Heart right ventricle (tissue), 16 donors: ENCODE measurements at regions of chr14 and their contacts with region 1.

Region 1: GRCh38 chr14:24058260-24058950 is 6.6 kb downstream of the CARMIL3 start:
- DNase-seq: peak; percentile 29 to 42
- ATAC-seq: peak; percentile 68 to 91 (median 83)
- H3K4me3 ChIP-seq: no peak overlapping the region
- H3K27ac ChIP-seq: no peak overlapping the region
- H3K4me1 ChIP-seq: peaks cover 0 to 3% (median 0%) of the 10 kb centered on the region in 9 donors
- H3K27me3 ChIP-seq: peaks cover 0 to 6% (median 0%) of the 10 kb centered on the region in 7 donors
- CTCF ChIP-seq: peak; percentile 48 to 94 (median 77)

Region 2: DNA sequence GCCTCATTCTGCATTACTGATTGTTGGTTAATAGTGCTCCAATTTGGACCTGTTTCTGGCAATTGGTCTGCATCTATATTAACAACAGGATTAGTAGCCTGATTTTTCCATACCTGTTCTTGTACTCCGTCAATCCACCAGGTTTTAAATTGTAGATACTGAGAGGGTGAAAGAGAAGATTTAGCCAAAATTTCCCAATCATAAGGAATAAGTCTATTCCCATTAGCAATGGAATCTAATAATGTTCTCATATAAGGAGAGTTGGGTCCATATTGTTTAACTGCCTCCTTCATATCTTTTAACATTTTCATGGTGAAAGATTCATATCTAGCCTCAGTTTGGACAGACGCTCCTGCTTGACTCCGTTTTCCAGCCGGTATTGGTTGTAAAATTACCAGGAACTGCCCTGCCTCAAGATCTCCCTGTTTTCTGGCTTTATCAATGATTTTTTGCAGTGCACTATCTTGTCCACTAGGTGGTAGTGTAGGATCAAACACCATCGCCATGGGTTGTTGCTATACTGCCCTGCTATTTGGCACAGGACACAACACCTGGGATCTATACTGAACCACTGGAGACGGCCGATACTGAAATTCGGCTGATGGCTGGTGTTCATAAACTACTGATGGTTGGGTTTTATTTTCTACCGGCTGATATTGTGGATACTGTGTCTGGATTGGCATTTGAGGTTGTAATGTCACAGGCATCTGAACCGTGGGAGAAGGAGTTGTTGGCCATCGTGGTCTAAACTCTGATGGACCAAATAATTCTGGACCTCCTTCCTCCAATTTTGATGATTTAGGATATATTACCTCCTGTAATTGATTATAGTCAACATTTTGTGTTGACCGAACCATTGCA is 44.5 kb before region 1 on chr14:
- intact Hi-C with region 1: loop called in 1 of 10 experiments (anchors 5 kb)
- DNase-seq: peak in 1 of 2 donors; percentile 53
- ATAC-seq: peak; percentile 76 to 87 (median 84)
- H3K4me3 ChIP-seq: no peak overlapping the region
- H3K27ac ChIP-seq: no peak overlapping the region
- H3K4me1 ChIP-seq: peaks cover 0 to 16% (median 0%) of the 10 kb centered on the region in 9 donors
- H3K27me3 ChIP-seq: no peaks in the 10 kb centered on the region
- CTCF ChIP-seq: peak; percentile 80 to 97 (median 91)

Region 3: DNA sequence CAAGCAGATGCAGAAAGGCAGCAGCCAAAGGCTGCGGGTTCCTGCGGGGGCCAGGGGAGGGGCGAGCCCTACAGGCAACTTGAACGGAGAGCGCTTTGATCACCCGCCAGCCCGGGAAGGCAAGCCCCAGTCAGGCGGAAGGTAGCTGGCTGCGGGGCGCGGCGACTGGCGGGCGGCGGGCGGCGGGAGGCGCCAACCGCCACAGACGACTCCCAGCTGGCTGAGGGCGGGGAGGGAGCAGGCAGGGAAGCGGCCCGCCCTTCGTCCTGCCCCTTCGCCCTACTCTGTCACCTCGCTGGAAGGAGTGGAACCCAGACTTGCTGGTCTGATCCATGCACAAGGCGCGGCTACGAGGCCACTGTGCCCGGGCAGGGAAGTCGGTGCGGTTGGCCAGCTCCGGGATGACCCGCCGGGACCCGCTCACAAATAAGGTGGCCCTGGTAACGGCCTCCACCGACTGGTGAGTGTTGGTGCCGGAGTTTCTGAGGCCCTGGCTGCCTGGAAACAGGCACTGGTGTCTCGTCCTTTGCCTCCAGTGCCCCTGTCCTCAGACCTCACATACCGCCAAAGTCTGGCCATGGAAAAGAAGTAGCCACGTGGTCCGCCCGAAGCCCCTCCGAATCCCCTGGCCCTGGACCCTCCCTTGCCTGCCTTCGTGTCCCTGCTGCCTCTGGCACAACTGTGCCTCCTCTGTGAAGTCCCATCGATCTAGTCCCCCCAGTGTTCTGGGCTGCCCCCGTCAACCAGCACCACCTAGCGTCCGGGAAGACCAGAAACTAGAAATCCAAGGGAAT is 22.0 kb before region 1 on chr14:
- intact Hi-C with region 1: no loop called
- DNase-seq: peak; percentile 79 to 86
- ATAC-seq: peak; percentile 95 to 98 (median 96)
- H3K4me3 ChIP-seq: peak overlapping the region; percentile 32 to 83 (median 71)
- H3K27ac ChIP-seq: peak overlapping the region; percentile 63 to 96 (median 94)
- H3K4me1 ChIP-seq: peaks cover 0 to 25% (median 4%) of the 10 kb centered on the region in 9 donors
- H3K27me3 ChIP-seq: no peaks in the 10 kb centered on the region
- CTCF ChIP-seq: peak; percentile 69 to 85 (median 74)

Region 4: GRCh38 chr14:24088095-24088494 is 29.7 kb after region 1 on chr14:
- intact Hi-C with region 1: loop called in 9 of 10 experiments (anchors 1 to 5 kb)
- DNase-seq: no peak
- ATAC-seq: no peak
- H3K4me3 ChIP-seq: no peak overlapping the region
- H3K27ac ChIP-seq: no peak overlapping the region
- H3K4me1 ChIP-seq: peaks cover 0 to 19% (median 0%) of the 10 kb centered on the region in 9 donors
- H3K27me3 ChIP-seq: peaks cover 0 to under 1% (median 0%) of the 10 kb centered on the region in 7 donors
- CTCF ChIP-seq: no peak

Region 5: GRCh38 chr14:24093901-24094761 is 35.7 kb after region 1 on chr14 and contains the start of gene PCK2:
- intact Hi-C with region 1: loop called in 9 of 10 experiments (anchors 1 to 5 kb)
- DNase-seq: peak; percentile 85 to 90
- ATAC-seq: peak; percentile 84 to 91 (median 88)
- H3K4me3 ChIP-seq: peak within 1 kb of the TSS; percentile 61 to 95 (median 87)
- H3K27ac ChIP-seq: peak within 1 kb of the TSS; percentile 74 to 95 (median 91)
- H3K4me1 ChIP-seq: peaks cover 3 to 38% (median 21%) of the 10 kb centered on the region in 9 donors
- H3K27me3 ChIP-seq: no peaks in the 10 kb centered on the region
- CTCF ChIP-seq: peak in 2 of 9 donors; percentile 15 to 23
- total RNA-seq, gene PCK2: 0.75 to 6.8 (median 2.6) TPM

Region 6: GRCh38 chr14:24108336-24108874 is 50.0 kb after region 1 on chr14:
- intact Hi-C with region 1: loop called in 5 of 10 experiments (anchors 1 to 5 kb)
- DNase-seq: no peak
- ATAC-seq: peak in 2 of 8 donors; percentile 7 to 25
- H3K4me3 ChIP-seq: no peak overlapping the region
- H3K27ac ChIP-seq: peak overlapping the region in 5 of 10 donors; percentile 6 to 77 (median 12)
- H3K4me1 ChIP-seq: peaks cover 0 to 24% (median 7%) of the 10 kb centered on the region in 9 donors
- H3K27me3 ChIP-seq: no peaks in the 10 kb centered on the region
- CTCF ChIP-seq: no peak

Region 7: DNA sequence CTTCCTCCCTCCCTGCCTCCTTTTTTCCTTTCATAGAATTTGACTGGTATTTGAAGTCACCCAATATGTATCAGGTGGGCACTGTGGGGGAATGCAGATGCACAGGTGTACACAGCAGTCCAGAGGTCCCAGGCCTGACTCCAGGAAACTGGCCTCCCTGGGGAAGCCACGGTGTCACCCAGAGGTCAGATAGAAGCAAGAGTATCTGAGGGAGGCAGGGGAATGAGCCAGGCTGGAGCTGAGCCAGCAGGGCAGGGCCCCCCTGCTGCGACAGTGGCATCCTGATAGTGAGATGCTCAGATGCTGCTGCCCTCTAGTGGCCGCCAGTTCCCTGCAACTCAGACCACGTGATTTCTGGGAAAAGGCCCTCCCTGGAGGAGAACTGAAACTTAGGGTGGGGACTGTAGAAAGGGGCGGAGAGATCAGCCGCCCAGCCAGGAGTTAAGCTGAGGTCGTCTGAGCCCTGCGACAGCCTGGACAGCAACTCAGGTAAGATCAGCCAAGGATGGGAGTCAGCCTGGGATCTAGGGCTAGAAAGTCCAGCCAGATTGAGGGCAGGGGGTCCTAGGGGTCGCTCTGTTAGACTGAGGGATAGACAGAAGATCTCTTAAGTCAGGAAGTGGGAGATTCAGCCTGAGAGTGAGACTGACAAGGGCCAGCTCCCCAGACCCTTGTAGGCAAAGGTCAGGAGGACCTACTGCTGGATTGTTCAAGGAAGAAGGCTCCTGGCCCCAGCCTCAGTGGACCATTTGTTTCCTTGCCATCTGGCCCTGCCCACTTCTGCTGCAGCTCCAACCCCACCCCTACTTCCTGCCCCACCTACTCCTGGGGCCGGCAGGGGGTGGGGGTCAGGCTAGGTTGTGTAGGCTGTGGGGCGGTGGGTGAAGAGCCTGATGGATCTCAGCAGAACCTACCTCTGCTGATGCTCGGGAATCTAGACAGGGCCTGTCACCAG is 102.7 kb after region 1 on chr14 and contains the start of gene IRF9:
- intact Hi-C with region 1: loop called in 2 of 10 experiments (anchors 2 kb)
- DNase-seq: peak; percentile 96 to 97
- ATAC-seq: peak; percentile 89 to 97 (median 96)
- H3K4me3 ChIP-seq: peak within 1 kb of the TSS; percentile 50 to 89 (median 66)
- H3K27ac ChIP-seq: peak within 1 kb of the TSS; percentile 92 to 100 (median 96)
- H3K4me1 ChIP-seq: peaks cover 9 to 50% (median 27%) of the 10 kb centered on the region in 9 donors
- H3K27me3 ChIP-seq: no peaks in the 10 kb centered on the region
- CTCF ChIP-seq: peak; percentile 90 to 98 (median 92)
- total RNA-seq, gene IRF9: 17.7 to 147 (median 36.7) TPM